Panc1 (cell line): ENCODE measurements at regions of chr22 and their contacts with region 1.

Region 1: GRCh38 chr22:41127451-41127850 is 35.1 kb downstream of the EP300 start:
- DNase-seq: no peak
- ATAC-seq: no peak
- H3K4me3 ChIP-seq: no peak overlapping the region
- H3K27ac ChIP-seq: no peak overlapping the region
- H3K4me1 ChIP-seq: no peaks in the 10 kb centered on the region
- H3K27me3 ChIP-seq: no peaks in the 10 kb centered on the region
- CTCF ChIP-seq: no peak

Region 2: DNA sequence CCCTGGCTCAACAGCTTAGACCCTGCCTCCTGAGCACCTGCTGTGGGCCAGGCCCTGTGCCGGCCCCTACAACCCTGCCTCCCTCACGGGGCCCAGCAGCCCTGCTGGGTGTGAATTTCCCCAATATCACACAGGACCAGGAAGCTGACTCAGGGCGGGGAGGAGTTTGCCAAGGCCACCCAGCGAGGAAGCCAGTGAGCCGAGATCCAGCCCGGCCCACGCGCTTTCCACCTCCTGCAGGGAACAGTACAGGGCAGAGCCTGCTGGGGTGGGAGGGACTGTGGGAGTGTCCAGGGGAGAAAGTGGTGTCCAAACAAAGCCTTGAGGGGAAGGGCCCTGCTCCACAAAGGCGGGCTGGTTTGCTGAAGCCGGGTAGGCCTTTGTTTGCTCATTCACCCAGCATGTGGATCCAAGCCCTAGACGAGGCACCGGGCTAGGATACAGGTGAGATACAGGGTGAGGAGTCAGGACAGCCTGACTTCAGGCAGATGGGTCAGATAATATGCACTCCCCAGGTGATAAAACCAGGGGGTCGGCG is 1834.8 kb before region 1 on chr22:
- CTCF ChIA-PET with region 1: no interaction called
- POLR2A ChIA-PET with region 1: no interaction called
- in situ Hi-C with region 1: no loop called
- intact Hi-C with region 1: no loop called
- DNase-seq: no peak
- ATAC-seq: peak; percentile 80
- H3K4me3 ChIP-seq: 0 out of 4 replicates have a peak overlapping the region, but pooled peaks of 1 of the 2 experiments have one; percentile 4
- H3K27ac ChIP-seq: peak overlapping the region; percentile 72
- H3K4me1 ChIP-seq: peaks cover 59% of the 10 kb centered on the region
- H3K27me3 ChIP-seq: no peaks in the 10 kb centered on the region
- CTCF ChIP-seq: no peak

Region 3: GRCh38 chr22:41169157-41169556 is 41.7 kb after region 1 on chr22:
- CTCF ChIA-PET with region 1: no interaction called
- POLR2A ChIA-PET with region 1: interaction called, 15 read pairs
- in situ Hi-C with region 1: no loop called
- intact Hi-C with region 1: no loop called
- DNase-seq: no peak
- ATAC-seq: no peak
- H3K4me3 ChIP-seq: no peak overlapping the region
- H3K27ac ChIP-seq: no peak overlapping the region
- H3K4me1 ChIP-seq: no peaks in the 10 kb centered on the region
- H3K27me3 ChIP-seq: no peaks in the 10 kb centered on the region
- CTCF ChIP-seq: no peak